HAP-1 (cell line): ENCODE measurements at regions of chr11 and their contacts with region 1.

Region 1: GRCh38 chr11:118359295-118359958 is at the start of gene UBE4A:
- DNase-seq: peak; percentile 84 to 97
- H3K4me3 ChIP-seq: peak within 1 kb of the TSS; percentile 84
- H3K4me1 ChIP-seq: peaks cover 8% of the 10 kb centered on the region
- H3K27me3 ChIP-seq: no peaks in the 10 kb centered on the region

Region 2: DNA sequence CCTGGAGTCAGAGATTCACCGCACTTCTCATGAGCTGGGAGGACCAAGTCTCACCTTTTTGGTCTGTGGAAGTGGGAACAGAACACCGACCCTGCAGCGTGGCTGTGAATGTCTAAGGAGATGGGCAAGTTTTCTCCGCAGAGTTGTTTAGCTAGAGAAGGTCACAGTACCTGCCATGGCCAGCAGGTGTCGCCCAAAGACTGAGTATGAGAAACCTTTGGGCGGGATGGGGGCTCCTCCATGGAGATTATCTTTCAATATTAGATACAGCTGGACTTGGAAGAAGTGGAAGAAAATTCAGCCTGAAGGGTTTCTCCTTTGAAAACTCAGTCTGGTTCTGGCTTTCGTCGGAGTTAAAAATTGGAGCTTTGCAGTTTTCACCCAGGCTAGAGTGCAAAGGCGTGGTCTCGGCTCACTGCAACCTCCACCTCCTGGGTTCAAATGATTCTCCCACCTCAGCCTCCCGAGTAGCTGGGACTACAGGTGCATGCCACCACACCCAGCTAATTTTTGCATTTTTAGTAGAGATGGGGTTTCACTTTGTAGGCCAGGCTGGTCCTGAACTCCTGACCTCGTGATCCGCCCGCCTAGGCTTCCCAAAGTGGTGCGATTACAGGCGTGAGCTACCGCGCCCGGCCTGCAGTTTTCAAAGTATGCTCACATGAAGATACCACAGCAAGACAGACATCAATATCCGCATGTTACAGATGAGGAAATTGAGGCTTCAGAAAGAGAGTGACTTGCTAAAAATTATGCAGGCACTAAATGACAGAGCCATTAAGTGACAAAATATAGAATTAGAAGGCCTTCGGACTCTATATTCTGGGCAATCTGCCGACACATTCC is 551.7 kb before region 1 on chr11:
- in situ Hi-C with region 1: no loop called
- DNase-seq: peak; percentile 49 to 87
- H3K4me3 ChIP-seq: no peak overlapping the region
- H3K4me1 ChIP-seq: no peaks in the 10 kb centered on the region
- H3K27me3 ChIP-seq: peaks cover 7% of the 10 kb centered on the region; the same call in 1 of the 2 replicates

Region 3: DNA sequence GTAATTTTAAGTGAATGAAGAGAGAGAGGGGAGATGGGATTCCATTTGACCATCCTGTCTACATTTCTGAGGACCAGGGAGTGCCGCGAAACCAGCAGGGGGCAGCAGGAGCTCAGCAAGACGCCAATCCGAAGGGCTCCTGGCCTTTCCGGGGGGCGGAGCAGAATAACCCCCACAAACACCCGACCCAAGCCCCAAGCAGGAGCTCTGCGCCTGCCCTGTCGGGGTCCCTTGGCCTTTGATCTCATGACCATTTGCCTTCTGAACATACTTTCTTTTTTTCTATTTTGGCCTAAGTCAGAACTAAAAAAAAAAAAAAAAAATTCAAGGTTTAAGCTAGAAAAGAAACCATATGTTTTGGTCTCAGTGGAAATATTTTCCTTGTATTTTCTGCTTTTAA is 161.1 kb before region 1 on chr11:
- in situ Hi-C with region 1: loop called (anchors 10 kb)
- DNase-seq: peak; percentile 56 to 85
- H3K4me3 ChIP-seq: no peak overlapping the region
- H3K4me1 ChIP-seq: no peaks in the 10 kb centered on the region
- H3K27me3 ChIP-seq: peaks cover 3% of the 10 kb centered on the region

Region 4: DNA sequence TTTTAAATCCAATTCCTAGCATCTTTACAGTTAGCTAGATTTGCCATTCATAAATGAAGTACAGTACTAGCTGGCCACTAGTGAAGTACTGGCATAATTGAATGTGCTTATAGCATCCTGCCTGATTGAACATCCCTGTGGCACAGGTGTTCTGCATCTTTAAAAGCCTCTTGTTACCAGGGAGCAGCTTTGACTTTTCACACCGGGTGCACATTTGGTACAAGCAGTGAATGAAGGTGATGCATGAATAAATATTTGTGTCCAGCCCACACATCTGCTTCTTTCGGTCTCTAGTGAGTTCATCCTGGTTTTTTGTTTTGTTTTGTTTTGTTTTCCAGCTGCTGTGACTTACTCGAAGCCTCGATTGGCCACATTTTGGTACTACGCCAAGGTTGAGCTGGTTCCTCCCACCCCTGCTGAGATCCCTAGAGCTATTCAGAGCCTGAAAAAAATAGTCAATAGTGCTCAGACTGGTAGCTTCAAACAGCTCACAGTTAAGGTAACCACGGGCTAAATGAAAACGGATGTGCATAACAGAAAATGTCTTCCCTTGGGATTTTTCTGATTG is 47.3 kb after region 1 on chr11:
- in situ Hi-C with region 1: no loop called
- DNase-seq: no peak
- H3K4me3 ChIP-seq: no peak overlapping the region
- H3K4me1 ChIP-seq: peaks cover 5% of the 10 kb centered on the region
- H3K27me3 ChIP-seq: no peaks in the 10 kb centered on the region